Heart right ventricle (tissue), 16 donors: ENCODE measurements at regions of chr9 and their contacts with region 1.

Region 1: GRCh38 chr9:12719431-12719830 is 26.2 kb downstream of the TYRP1 start:
- DNase-seq: no peak
- ATAC-seq: peak in 3 of 8 donors; percentile 59 to 69 (median 65)
- H3K4me3 ChIP-seq: no peak overlapping the region
- H3K27ac ChIP-seq: no peak overlapping the region
- H3K4me1 ChIP-seq: no peaks in the 10 kb centered on the region
- H3K27me3 ChIP-seq: no peaks in the 10 kb centered on the region
- CTCF ChIP-seq: peak in 8 of 9 donors; percentile 31 to 68 (median 55)

Region 2: GRCh38 chr9:12464910-12465512 is 254.4 kb before region 1 on chr9:
- intact Hi-C with region 1: no loop called
- DNase-seq: no peak
- ATAC-seq: no peak
- H3K4me3 ChIP-seq: no peak overlapping the region
- H3K27ac ChIP-seq: no peak overlapping the region
- H3K4me1 ChIP-seq: no peaks in the 10 kb centered on the region
- H3K27me3 ChIP-seq: no peaks in the 10 kb centered on the region
- CTCF ChIP-seq: peak in 8 of 9 donors; percentile 18 to 69 (median 56)

Region 3: DNA sequence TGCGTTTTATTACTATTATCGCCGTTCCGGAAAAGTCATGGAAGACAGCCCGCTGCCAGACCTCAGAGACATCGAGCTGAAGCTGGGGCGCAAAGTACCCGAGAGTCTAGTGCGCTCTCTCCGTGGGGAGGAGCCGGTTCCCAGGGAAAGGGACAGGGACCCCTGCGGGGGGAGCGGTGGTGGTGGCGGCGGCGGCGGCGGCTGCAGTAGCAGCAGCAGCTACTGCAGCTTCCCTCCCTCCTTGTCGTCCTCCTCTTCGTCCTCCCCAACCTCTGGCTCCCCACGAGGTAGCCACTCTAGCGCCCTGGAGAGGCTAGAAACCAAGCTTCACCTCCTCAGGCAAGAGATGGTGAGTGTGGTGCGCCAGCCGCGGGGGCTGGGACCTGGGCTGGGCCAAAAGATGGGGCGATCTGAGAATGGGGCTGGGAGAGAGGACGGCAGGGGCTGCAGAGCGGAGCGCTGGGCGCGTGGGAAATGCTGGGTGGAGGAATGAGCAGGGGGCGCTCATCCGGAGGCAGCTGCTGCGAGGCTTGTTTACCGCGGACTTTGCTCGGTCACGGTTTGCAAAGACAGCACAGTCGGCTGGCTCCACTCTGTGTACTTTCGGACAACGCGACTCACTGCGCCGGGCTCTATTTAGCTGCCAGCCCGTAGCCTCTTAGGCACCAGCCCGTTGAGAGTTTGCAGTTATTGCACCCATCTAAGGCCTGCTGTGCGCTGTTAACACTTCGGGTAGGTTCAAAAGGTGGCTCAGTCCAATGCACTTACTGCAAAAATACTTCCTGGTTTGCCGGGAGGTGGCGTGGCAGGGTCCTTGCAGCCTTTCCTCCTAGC is 56.5 kb after region 1 on chr9:
- intact Hi-C with region 1: loop called in 5 of 10 experiments (anchors 5 to 10 kb)
- DNase-seq: peak; percentile 5 to 45
- ATAC-seq: peak; percentile 61 to 97 (median 94)
- H3K4me3 ChIP-seq: peak overlapping the region; percentile 70 to 91 (median 83)
- H3K27ac ChIP-seq: peak overlapping the region; percentile 84 to 93 (median 86)
- H3K4me1 ChIP-seq: peaks cover 0 to 36% (median 17%) of the 10 kb centered on the region in 9 donors
- H3K27me3 ChIP-seq: peaks cover 0 to 19% (median 0%) of the 10 kb centered on the region in 7 donors
- CTCF ChIP-seq: peak in 8 of 9 donors; percentile 24 to 70 (median 55)

Region 4: GRCh38 chr9:12819436-12820185 is 100.2 kb after region 1 on chr9:
- intact Hi-C with region 1: loop called in 3 of 10 experiments (anchors 10 kb)
- DNase-seq: no peak
- ATAC-seq: no peak
- H3K4me3 ChIP-seq: no peak overlapping the region
- H3K27ac ChIP-seq: peak overlapping the region in 2 of 10 donors; percentile 2 to 56
- H3K4me1 ChIP-seq: peaks cover 0 to 25% (median 14%) of the 10 kb centered on the region in 9 donors
- H3K27me3 ChIP-seq: no peaks in the 10 kb centered on the region
- CTCF ChIP-seq: peak; percentile 15 to 48 (median 30)

Region 5: DNA sequence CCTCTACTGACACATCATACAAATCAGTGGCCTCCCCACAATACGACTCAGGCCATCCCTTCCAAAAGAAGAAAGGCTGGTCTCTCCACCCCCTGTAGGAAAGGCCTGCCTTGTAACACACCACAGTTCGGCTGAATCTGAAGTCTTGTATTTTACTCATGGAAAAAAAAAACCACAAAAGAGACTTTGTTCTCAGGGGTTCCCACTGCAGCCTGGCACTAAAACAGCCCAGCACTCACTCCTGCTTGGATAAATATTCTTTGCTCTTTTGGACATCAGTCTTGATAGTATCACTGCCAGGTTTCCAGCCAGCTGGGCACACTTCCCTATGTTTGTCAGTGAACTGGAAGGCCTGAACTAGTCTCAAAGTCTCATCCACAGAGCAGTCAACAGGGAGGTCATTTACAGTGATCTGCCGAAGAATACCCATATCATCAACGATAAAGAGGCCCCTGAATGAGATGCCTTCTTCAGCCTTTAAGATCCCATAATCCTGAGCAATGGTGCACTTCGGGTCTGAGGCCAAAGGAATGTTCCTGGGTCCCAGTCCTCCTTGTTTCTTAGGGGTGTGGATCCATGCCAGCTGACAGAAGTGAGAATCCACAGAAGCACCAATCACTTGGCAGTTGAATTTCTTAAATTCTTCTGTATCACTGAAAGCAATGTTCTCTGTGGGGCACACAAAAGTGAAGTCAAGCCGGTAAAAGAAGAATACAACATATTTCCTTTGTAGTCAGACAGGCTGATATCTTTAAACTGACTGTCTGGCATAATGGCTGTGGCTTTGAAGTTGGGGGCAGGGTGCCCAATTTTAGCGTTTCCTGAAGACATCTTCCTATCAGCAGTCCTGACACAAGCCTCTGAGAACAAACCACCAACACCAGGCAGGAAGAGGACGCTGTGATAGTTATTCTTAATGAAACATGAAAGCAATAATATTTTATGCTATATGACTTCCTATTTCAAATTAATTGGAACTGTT is 253.5 kb after region 1 on chr9:
- intact Hi-C with region 1: loop called in 1 of 10 experiments (anchors 10 kb)
- DNase-seq: peak in 1 of 2 donors; percentile 13
- ATAC-seq: peak in 7 of 8 donors; percentile 55 to 87 (median 81)
- H3K4me3 ChIP-seq: no peak overlapping the region
- H3K27ac ChIP-seq: peak overlapping the region in 7 of 10 donors; percentile 17 to 61 (median 39)
- H3K4me1 ChIP-seq: peaks cover 0 to 17% (median 8%) of the 10 kb centered on the region in 9 donors
- H3K27me3 ChIP-seq: no peaks in the 10 kb centered on the region
- CTCF ChIP-seq: no peak

Region 6: DNA sequence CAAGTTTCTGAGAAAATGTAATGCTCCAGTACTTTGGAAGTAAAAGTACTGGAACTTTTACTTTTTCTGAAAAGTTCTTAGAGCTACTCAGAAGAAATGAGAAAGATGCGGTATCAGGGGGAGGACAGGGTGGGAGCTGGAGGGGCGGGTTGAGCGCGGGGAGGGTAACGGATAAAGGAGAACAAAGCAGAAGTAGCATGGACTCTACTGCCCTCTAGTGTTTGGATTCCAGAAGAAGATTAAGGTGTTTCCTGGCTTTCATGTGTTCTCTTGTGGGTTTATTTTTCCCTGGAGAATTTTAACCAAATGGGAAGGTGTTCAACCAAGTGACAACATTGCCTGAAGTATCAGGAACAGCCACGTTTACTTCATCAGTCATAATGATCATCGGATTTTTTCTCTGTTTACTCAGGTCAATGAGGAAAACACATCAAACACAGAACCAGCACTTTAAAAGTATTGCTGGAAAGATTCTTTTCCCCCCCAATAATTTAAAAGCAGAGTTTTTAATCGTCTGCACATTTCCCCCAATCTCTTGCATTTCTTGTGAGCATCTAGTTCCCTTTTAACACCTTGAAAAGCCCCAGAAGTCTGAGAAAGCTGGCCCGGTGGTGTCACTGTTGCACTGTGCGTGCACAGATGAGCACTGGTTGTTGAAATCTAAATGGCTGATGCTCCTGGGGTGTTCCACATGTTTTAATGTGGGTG is 369.4 kb after region 1 on chr9:
- intact Hi-C with region 1: loop called (anchors 2 to 5 kb)
- DNase-seq: peak in 1 of 2 donors; percentile 13
- ATAC-seq: peak in 5 of 8 donors; percentile 51 to 73 (median 65)
- H3K4me3 ChIP-seq: peak overlapping the region in 1 of 10 donors; percentile 16
- H3K27ac ChIP-seq: no peak overlapping the region
- H3K4me1 ChIP-seq: peaks cover 0 to 7% (median 0%) of the 10 kb centered on the region in 9 donors
- H3K27me3 ChIP-seq: no peaks in the 10 kb centered on the region
- CTCF ChIP-seq: peak; percentile 59 to 84 (median 76)